T-cell (primary cell): ENCODE measurements at regions of chr2 and their contacts with region 1.

Region 1: GRCh38 chr2:84865181-84865783 is 15.6 kb downstream of the TRABD2A start:
- DNase-seq: peak in 2 of 35 experiments; percentile 13 to 70
- ATAC-seq: peak; percentile 55 to 62 (median 61)
- H3K4me3 ChIP-seq: peak overlapping the region in 1 of 2 donors; percentile 44
- H3K4me3 Mint-ChIP-seq: peak overlapping the region in 2 of 3 donors; percentile 4 to 76
- H3K27ac ChIP-seq: peak overlapping the region; percentile 32
- H3K27ac Mint-ChIP-seq: peak overlapping the region; percentile 97 to 98
- H3K4me1 ChIP-seq: peaks cover 53 to 70% of the 10 kb centered on the region in 2 experiments
- H3K4me1 Mint-ChIP-seq: peaks cover 88 to 92% (median 90%) of the 10 kb centered on the region in 3 donors
- H3K27me3 ChIP-seq: no peaks in the 10 kb centered on the region
- H3K27me3 Mint-ChIP-seq: no peaks in the 10 kb centered on the region

Region 2: GRCh38 chr2:84516234-84516986 is 348.9 kb before region 1 on chr2 and contains the start of gene DNAH6:
- CTCF ChIA-PET with region 1: interaction called in 1 of 2 experiments, 10 read pairs
- POLR2A ChIA-PET with region 1: no interaction called
- DNase-seq: peak; percentile 60 to 94 (median 87)
- ATAC-seq: peak; percentile 99 to 100 (median 100)
- H3K4me3 ChIP-seq: peak within 1 kb of the TSS; percentile 53 to 77
- H3K4me3 Mint-ChIP-seq: peak within 1 kb of the TSS; percentile 75 to 88 (median 84)
- H3K27ac ChIP-seq: peak within 1 kb of the TSS; percentile 43
- H3K27ac Mint-ChIP-seq: peak within 1 kb of the TSS; percentile 82 to 87
- H3K4me1 ChIP-seq: peaks cover 9 to 11% of the 10 kb centered on the region in 2 experiments
- H3K4me1 Mint-ChIP-seq: peaks cover 17 to 31% (median 22%) of the 10 kb centered on the region in 3 donors
- H3K27me3 ChIP-seq: no peaks in the 10 kb centered on the region
- H3K27me3 Mint-ChIP-seq: no peaks in the 10 kb centered on the region
- total RNA-seq, gene DNAH6: 0.44 to 2.0 (median 1.2) TPM

Region 3: DNA sequence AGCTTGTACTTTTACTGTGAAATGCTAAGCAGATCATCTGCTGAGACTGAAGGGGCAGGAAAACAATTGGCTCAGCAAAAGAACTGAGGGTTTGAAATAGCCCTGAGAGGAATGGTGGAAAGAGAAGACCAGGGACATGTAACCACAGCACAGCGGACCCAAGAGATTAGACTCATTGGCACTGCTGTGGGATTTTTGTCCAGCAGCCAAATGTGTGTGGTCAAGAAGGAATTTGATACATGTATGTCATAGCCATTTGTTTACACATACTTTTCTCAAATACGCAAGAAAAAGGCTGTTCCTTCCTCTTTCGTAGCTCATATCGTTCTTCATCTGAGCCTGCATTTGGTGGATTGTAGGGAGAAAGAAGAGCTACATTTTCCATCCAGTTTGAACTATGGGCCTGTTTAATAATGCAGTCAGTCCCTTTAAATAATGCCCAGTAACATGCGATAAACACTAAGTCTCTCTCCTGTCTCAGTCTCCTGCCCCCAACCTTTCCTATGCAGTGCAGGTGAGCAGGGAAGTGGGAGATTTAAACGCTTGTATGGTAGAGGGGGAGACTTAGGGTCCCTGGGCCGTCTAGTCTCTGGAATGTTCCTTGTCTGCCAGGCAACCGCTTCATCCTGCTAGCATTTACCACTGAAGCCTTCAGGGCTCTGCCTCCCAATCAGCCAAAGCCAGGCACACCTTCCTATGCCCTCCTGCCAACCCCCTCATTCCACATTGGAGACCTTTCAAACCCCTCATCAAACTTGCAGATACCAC is 58.0 kb before region 1 on chr2:
- CTCF ChIA-PET with region 1: no interaction called
- POLR2A ChIA-PET with region 1: no interaction called
- DNase-seq: no peak
- ATAC-seq: no peak
- H3K4me3 ChIP-seq: no peak overlapping the region
- H3K4me3 Mint-ChIP-seq: no peak overlapping the region
- H3K27ac ChIP-seq: no peak overlapping the region
- H3K27ac Mint-ChIP-seq: peak overlapping the region in 1 of 2 donors; percentile 53
- H3K4me1 ChIP-seq: peaks cover 0 to 5% of the 10 kb centered on the region in 2 experiments
- H3K4me1 Mint-ChIP-seq: peaks cover 27 to 33% (median 31%) of the 10 kb centered on the region in 3 donors
- H3K27me3 ChIP-seq: no peaks in the 10 kb centered on the region
- H3K27me3 Mint-ChIP-seq: no peaks in the 10 kb centered on the region

Region 4: GRCh38 chr2:84846041-84846663 is 19.1 kb before region 1 on chr2:
- CTCF ChIA-PET with region 1: interaction called, 4 to 10 read pairs
- POLR2A ChIA-PET with region 1: interaction called in 1 of 2 experiments, 3 read pairs
- DNase-seq: peak in 32 of 35 experiments; percentile 7 to 81 (median 52)
- ATAC-seq: peak; percentile 75 to 83 (median 79)
- H3K4me3 ChIP-seq: peak overlapping the region in 1 of 2 donors; percentile 45
- H3K4me3 Mint-ChIP-seq: peak overlapping the region; percentile 46 to 74 (median 62)
- H3K27ac ChIP-seq: peak overlapping the region; percentile 94
- H3K27ac Mint-ChIP-seq: peak overlapping the region; percentile 97 to 99
- H3K4me1 ChIP-seq: peaks cover 87 to 98% of the 10 kb centered on the region in 2 experiments
- H3K4me1 Mint-ChIP-seq: peaks cover 91 to 98% (median 97%) of the 10 kb centered on the region in 3 donors
- H3K27me3 ChIP-seq: no peaks in the 10 kb centered on the region
- H3K27me3 Mint-ChIP-seq: no peaks in the 10 kb centered on the region

Region 5: GRCh38 chr2:84918430-84918829 is 53.1 kb after region 1 on chr2:
- CTCF ChIA-PET with region 1: interaction called, 5 to 11 read pairs
- POLR2A ChIA-PET with region 1: interaction called in 1 of 2 experiments, 5 read pairs
- DNase-seq: no peak
- ATAC-seq: no peak
- H3K4me3 ChIP-seq: no peak overlapping the region
- H3K4me3 Mint-ChIP-seq: peak overlapping the region in 1 of 3 donors; percentile 38
- H3K27ac ChIP-seq: peak overlapping the region; percentile 19
- H3K27ac Mint-ChIP-seq: peak overlapping the region; percentile 87 to 93
- H3K4me1 ChIP-seq: peaks cover 19 to 24% of the 10 kb centered on the region in 2 experiments
- H3K4me1 Mint-ChIP-seq: peaks cover 30 to 43% (median 30%) of the 10 kb centered on the region in 3 donors
- H3K27me3 ChIP-seq: no peaks in the 10 kb centered on the region
- H3K27me3 Mint-ChIP-seq: no peaks in the 10 kb centered on the region

Region 6: GRCh38 chr2:85078536-85078935 is 213.3 kb after region 1 on chr2:
- CTCF ChIA-PET with region 1: no interaction called
- POLR2A ChIA-PET with region 1: no interaction called
- DNase-seq: no peak
- ATAC-seq: no peak
- H3K4me3 ChIP-seq: no peak overlapping the region
- H3K4me3 Mint-ChIP-seq: no peak overlapping the region
- H3K27ac ChIP-seq: no peak overlapping the region
- H3K27ac Mint-ChIP-seq: no peak overlapping the region
- H3K4me1 ChIP-seq: no peaks in the 10 kb centered on the region
- H3K4me1 Mint-ChIP-seq: no peaks in the 10 kb centered on the region
- H3K27me3 ChIP-seq: peaks cover 0 to 35% of the 10 kb centered on the region in 2 experiments
- H3K27me3 Mint-ChIP-seq: peaks cover 35 to 38% of the 10 kb centered on the region in 2 donors